MCF 10A (cell line): ENCODE measurements at regions of chr1 and their contacts with region 1.

Region 1: GRCh38 chr1:229238674-229239415 is 32.1 kb upstream of the RAB4A start:
- DNase-seq: peak; percentile 78
- H3K4me3 Mint-ChIP-seq: no peak overlapping the region
- H3K27ac Mint-ChIP-seq: peak overlapping the region; percentile 92
- H3K4me1 Mint-ChIP-seq: peaks cover 20% of the 10 kb centered on the region
- H3K27me3 Mint-ChIP-seq: no peaks in the 10 kb centered on the region
- CTCF ChIP-seq: no peak

Region 2: GRCh38 chr1:229249854-229250644 is 11.2 kb after region 1 on chr1:
- CTCF ChIA-PET with region 1: interaction called, 34 read pairs
- POLR2A ChIA-PET with region 1: interaction called, 126 read pairs
- intact Hi-C with region 1: no loop called
- DNase-seq: no peak
- H3K4me3 Mint-ChIP-seq: no peak overlapping the region
- H3K27ac Mint-ChIP-seq: peak overlapping the region; percentile 4
- H3K4me1 Mint-ChIP-seq: peaks cover 36% of the 10 kb centered on the region
- H3K27me3 Mint-ChIP-seq: no peaks in the 10 kb centered on the region
- CTCF ChIP-seq: no peak

Region 3: GRCh38 chr1:229972600-229973296 is 733.9 kb after region 1 on chr1:
- CTCF ChIA-PET with region 1: no interaction called
- POLR2A ChIA-PET with region 1: no interaction called
- intact Hi-C with region 1: no loop called
- DNase-seq: no peak
- H3K4me3 Mint-ChIP-seq: no peak overlapping the region
- H3K27ac Mint-ChIP-seq: no peak overlapping the region
- H3K4me1 Mint-ChIP-seq: no peaks in the 10 kb centered on the region
- H3K27me3 Mint-ChIP-seq: peaks cover 8% of the 10 kb centered on the region
- CTCF ChIP-seq: no peak